CD4-positive, alpha-beta T cell (primary cell): ENCODE measurements at regions of chr12 and their contacts with region 1.

Region 1: GRCh38 chr12:118016424-118017264 is at the start of gene RFC5:
- DNase-seq: peak; percentile 94 to 99 (median 97)
- ATAC-seq: peak; percentile 98
- H3K4me3 ChIP-seq: peak within 1 kb of the TSS; percentile 85
- H3K4me3 Mint-ChIP-seq: peak within 1 kb of the TSS; percentile 90
- H3K27ac ChIP-seq: peak within 1 kb of the TSS; percentile 11 to 16
- H3K27ac Mint-ChIP-seq: peak within 1 kb of the TSS; percentile 77
- H3K4me1 ChIP-seq: peaks cover 17% of the 10 kb centered on the region
- H3K4me1 Mint-ChIP-seq: peaks cover 21% of the 10 kb centered on the region
- H3K27me3 ChIP-seq: no peaks in the 10 kb centered on the region
- H3K27me3 Mint-ChIP-seq: no peaks in the 10 kb centered on the region
- CTCF ChIP-seq: no peak
- total RNA-seq, gene RFC5: 8.7 to 9.1 TPM

Region 2: DNA sequence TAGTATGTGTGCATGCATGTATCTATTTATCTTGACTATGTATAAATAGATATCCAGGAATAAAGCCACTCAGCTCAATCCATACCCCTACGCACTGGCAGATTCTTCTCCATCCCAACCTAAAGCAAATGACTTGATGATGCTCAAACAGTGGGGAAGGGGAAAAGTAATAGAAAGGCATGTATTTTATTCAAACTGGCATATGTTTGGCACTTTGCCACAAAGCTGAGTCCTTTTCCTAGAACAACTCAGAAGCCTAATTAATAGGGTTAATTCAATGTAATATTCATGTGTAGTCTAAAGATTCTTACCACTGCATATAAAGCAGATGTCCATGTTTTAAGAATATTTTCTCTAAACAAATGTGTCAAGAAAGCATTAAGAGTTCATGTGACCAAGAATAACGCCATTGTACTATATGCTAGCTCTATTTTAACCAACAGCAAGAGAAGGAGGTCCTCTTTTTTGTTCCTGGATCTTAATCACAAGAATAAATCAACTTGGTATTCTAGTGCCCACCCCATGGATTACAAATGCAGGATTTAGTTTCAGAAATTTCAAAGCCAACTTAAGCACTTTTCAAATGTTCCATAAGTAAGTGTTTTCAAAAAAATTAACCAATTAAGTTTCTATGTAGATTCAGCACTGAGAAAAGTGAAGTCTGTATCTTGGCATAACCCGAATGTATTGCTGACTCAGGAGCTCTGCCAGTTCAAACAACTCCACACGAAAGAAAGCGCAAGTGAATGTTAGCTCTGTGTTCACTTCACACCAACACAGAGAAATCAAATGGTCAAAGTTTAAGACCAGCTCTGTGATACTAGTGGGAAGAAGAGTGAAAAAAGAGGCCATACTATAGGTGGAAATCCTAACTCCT is 1972.7 kb before region 1 on chr12:
- CTCF ChIA-PET with region 1: no interaction called
- POLR2A ChIA-PET with region 1: no interaction called
- intact Hi-C with region 1: no loop called
- DNase-seq: no peak
- ATAC-seq: no peak
- H3K4me3 ChIP-seq: no peak overlapping the region
- H3K4me3 Mint-ChIP-seq: no peak overlapping the region
- H3K27ac ChIP-seq: no peak overlapping the region
- H3K27ac Mint-ChIP-seq: no peak overlapping the region
- H3K4me1 ChIP-seq: no peaks in the 10 kb centered on the region
- H3K4me1 Mint-ChIP-seq: peaks cover 65% of the 10 kb centered on the region
- H3K27me3 ChIP-seq: no peaks in the 10 kb centered on the region
- H3K27me3 Mint-ChIP-seq: no peaks in the 10 kb centered on the region
- CTCF ChIP-seq: no peak

Region 3: GRCh38 chr12:116818948-116819832 is 1197.5 kb before region 1 on chr12:
- CTCF ChIA-PET with region 1: no interaction called
- POLR2A ChIA-PET with region 1: no interaction called
- intact Hi-C with region 1: loop called in 1 of 2 experiments (anchors 10 kb)
- DNase-seq: peak; percentile 83 to 97 (median 88)
- ATAC-seq: peak; percentile 86
- H3K4me3 ChIP-seq: peak overlapping the region; percentile 71
- H3K4me3 Mint-ChIP-seq: peak overlapping the region; percentile 98
- H3K27ac ChIP-seq: peak overlapping the region; percentile 80 to 81
- H3K27ac Mint-ChIP-seq: peak overlapping the region; percentile 89
- H3K4me1 ChIP-seq: peaks cover 16% of the 10 kb centered on the region
- H3K4me1 Mint-ChIP-seq: peaks cover 21% of the 10 kb centered on the region
- H3K27me3 ChIP-seq: no peaks in the 10 kb centered on the region
- H3K27me3 Mint-ChIP-seq: no peaks in the 10 kb centered on the region
- CTCF ChIP-seq: no peak

Region 4: GRCh38 chr12:118055144-118055557 is 38.5 kb after region 1 on chr12:
- CTCF ChIA-PET with region 1: interaction called, 4 read pairs
- POLR2A ChIA-PET with region 1: no interaction called
- intact Hi-C with region 1: loop called in 1 of 2 experiments (anchors 2 kb)
- DNase-seq: peak; percentile 37 to 85 (median 61)
- ATAC-seq: peak; percentile 85
- H3K4me3 ChIP-seq: no peak overlapping the region
- H3K4me3 Mint-ChIP-seq: peak overlapping the region; percentile 40
- H3K27ac ChIP-seq: no peak overlapping the region
- H3K27ac Mint-ChIP-seq: peak overlapping the region; percentile 75
- H3K4me1 ChIP-seq: peaks cover 23% of the 10 kb centered on the region
- H3K4me1 Mint-ChIP-seq: peaks cover 32% of the 10 kb centered on the region
- H3K27me3 ChIP-seq: no peaks in the 10 kb centered on the region
- H3K27me3 Mint-ChIP-seq: no peaks in the 10 kb centered on the region
- CTCF ChIP-seq: peak; percentile 66

Region 5: DNA sequence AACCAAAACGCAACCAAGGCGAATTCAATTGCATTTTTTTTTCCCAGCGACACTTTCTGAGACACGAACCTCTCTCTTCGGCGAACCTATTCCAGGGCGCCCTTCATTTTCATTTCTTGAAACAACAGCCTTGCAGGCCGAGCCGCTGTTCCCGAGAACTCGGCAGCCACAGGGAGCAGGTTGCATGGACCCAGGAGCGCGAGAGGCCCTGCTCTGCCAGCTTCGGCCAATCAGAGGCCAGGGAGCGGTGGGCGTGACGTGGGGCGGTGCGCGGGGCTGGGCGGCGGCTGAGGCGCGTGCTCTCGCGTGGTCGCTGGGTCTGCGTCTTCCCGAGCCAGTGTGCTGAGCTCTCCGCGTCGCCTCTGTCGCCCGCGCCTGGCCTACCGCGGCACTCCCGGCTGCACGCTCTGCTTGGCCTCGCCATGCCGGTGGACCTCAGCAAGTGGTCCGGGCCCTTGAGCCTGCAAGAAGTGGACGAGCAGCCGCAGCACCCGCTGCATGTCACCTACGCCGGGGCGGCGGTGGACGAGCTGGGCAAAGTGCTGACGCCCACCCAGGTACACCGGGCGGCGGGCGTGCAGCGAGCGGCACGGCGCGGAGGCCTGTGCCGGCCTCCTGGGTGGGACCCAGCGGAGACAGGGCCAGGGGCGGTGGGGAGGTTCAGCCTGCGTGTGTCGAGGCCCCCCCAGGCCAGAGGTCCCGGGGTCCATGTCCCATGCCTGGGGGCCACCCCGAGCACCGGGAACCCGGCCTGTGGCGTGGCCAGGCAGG is 119.3 kb after region 1 on chr12 and contains the start of gene PEBP1:
- CTCF ChIA-PET with region 1: no interaction called
- POLR2A ChIA-PET with region 1: interaction called, 7 read pairs
- intact Hi-C with region 1: loop called in 1 of 2 experiments (anchors 2 kb)
- DNase-seq: peak; percentile 85 to 95 (median 92)
- ATAC-seq: peak; percentile 99
- H3K4me3 ChIP-seq: peak within 1 kb of the TSS; percentile 91
- H3K4me3 Mint-ChIP-seq: peak within 1 kb of the TSS; percentile 98
- H3K27ac ChIP-seq: peak within 1 kb of the TSS; percentile 41 to 42
- H3K27ac Mint-ChIP-seq: peak within 1 kb of the TSS; percentile 92
- H3K4me1 ChIP-seq: peaks cover 33% of the 10 kb centered on the region
- H3K4me1 Mint-ChIP-seq: peaks cover 41% of the 10 kb centered on the region
- H3K27me3 ChIP-seq: no peaks in the 10 kb centered on the region
- H3K27me3 Mint-ChIP-seq: no peaks in the 10 kb centered on the region
- CTCF ChIP-seq: no peak
- total RNA-seq, gene PEBP1: 116 to 119 TPM